GM18951 (cell line): ENCODE measurements at regions of chr19 and their contacts with region 1.

Region 1: DNA sequence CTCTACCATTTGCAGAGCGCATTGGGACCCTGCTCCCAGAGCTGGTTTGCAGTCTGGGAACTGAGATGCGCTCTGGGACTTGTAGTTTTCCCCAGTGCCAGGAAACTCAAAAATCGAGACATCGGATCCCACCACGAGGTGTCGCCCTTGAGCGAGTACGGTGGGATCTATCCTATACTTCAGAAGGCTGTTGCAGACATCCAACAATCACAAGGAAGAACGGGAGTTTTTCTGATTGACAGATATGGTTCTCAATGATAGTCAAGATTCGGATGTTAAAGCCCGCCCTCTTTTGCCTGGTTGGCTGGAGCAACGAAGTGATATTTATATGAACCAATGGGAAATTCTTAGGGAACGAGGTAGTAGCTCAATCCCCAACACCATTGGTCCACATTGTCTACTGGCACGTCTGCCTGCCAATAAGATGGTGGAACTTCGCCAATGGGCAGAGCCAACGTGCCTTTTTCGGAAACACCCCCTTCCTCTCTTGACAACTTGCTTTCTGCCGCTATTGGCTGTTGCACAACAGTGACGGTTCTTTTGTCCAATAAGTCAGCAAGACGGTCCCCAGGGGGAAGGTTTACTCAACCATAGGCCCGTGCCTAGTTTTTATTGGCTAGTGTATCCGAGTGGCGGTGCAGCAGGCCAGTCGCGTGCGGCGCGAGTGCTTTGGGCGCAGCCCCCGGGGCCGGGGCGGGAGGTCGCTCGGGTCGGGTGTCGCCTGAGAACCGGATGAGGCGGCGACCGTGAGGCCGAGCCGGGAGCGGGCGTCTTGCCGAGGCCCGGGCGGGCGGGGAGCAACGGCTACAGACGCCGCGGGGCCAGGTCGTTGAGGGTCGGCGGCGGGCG is at the start of gene DNM2:
- POLR2A ChIP-seq: peak; percentile 90

Region 2: DNA sequence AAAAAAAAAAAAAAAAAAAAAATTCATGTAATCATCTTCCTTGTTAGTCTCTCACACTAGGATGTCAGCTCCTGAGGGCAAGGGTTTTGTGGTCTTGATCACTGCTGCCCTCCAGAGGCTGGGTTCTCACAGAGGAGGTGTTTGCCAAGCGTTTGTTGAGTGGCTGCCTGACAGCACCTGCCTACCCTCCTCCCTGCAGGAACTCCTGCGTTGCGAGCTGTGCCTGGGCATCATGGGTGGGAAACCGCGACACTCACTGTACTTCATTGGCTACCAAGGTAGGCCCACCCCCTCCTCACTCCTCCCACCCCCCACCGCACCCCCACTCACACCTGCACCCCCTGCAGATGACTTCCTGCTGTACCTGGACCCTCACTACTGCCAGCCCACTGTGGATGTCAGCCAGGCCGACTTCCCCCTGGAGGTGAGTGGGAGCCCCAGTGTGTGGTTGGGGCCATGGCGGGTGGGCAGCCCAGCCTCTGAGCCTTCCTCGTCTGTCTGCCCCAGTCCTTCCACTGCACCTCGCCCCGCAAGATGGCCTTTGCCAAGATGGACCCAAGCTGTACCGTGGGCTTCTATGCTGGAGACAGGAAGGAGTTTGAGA is 165.8 kb before region 1 on chr19:
- in situ Hi-C with region 1: no loop called
- POLR2A ChIP-seq: no peak

Region 3: GRCh38 chr19:10780368-10780767 is 62.8 kb after region 1 on chr19:
- in situ Hi-C with region 1: no loop called
- POLR2A ChIP-seq: no peak

Region 4: DNA sequence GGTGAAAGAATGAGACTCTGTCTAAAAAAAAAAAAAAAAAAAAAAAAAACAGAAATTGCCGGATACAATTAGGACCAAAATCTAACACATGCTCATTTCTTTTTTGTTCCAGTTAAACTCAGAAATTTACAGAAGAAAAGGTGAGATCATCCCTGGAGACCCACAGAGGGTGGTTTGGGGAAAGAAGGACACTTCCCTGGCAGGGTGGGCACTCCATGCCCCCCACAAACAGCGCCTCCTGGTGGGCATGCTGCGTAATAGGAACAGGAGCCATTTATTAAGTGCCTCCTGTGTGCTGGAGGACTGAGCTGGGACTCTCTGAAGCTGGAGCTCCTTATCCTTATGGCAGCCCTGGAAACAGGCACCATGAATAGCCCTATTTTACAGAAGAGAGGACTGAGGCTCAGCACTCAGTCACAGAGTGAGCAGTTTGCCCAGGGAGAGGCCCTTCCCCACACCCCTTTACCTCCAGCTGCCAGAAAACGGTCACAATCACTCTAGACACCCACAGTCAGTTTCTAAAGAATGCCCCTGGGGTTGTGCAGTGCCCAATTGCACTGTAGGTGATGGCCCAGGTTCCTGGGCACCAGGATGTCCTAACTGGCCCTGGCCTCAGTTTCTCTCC is 140.7 kb after region 1 on chr19:
- in situ Hi-C with region 1: loop called (anchors 10 kb)
- POLR2A ChIP-seq: no peak

Region 5: GRCh38 chr19:11018179-11018578 is 300.6 kb after region 1 on chr19:
- in situ Hi-C with region 1: no loop called
- POLR2A ChIP-seq: no peak